ENCODE measurements at regions of chr6 and their contacts with region 1.

Region 1: GRCh38 chr6:6390849-6391602 is 70.6 kb upstream of the F13A1 start:
- DNase-seq: peak; percentile 81
- ATAC-seq: peak; percentile 75
- H3K4me3 ChIP-seq: peak overlapping the region in 3 of 5 experiments; percentile 3 to 36 (median 26)
- H3K4me3 Mint-ChIP-seq: peak overlapping the region; percentile 87
- H3K27ac ChIP-seq: peak overlapping the region; percentile 83 to 92
- H3K27ac Mint-ChIP-seq: peak overlapping the region; percentile 97
- H3K4me1 ChIP-seq: peaks cover 37 to 44% of the 10 kb centered on the region in 2 donors
- H3K4me1 Mint-ChIP-seq: peaks cover 58% of the 10 kb centered on the region
- H3K27me3 ChIP-seq: no peaks in the 10 kb centered on the region
- H3K27me3 Mint-ChIP-seq: peaks cover 3% of the 10 kb centered on the region
- CTCF ChIP-seq: no peak

Region 2: DNA sequence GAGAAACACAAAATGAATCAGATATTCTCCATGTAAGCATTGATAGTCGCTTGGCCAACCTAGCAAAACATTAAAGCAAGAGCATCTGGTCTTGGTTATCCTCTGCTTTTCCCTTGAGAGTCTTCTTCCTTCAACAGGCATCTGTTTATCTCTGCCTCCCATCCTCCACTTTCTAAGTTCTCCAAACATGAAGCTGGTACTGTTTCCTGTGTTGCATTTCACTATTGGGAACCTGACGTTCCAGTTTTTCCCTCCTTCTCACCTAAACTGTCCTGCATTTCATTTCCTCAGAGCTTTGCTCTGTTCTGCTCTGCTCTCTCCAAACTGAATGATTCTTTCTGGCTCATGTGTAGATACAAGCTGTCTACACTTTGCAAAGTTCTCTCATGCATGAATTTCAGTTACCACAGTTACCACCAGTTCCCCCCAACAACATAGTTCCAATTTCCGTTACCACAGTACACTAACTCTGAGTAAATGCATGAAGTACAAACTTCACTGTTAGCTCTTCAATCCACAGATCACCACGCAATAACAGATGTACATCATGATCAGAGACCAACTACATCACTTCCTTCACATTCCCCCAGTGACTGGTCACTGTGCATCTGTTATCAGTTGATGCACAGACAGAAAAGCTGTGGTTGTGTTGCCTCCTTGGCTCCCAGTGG is 16.2 kb after region 1 on chr6:
- CTCF ChIA-PET with region 1: interaction called, 23 read pairs
- POLR2A ChIA-PET with region 1: interaction called, 64 read pairs
- intact Hi-C with region 1: loop called (anchors 1 kb)
- DNase-seq: peak; percentile 90
- ATAC-seq: peak; percentile 85
- H3K4me3 ChIP-seq: peak overlapping the region in 3 of 5 experiments; percentile 1 to 45 (median 32)
- H3K4me3 Mint-ChIP-seq: no peak overlapping the region
- H3K27ac ChIP-seq: peak overlapping the region; percentile 65 to 69
- H3K27ac Mint-ChIP-seq: no peak overlapping the region
- H3K4me1 ChIP-seq: peaks cover 24 to 25% of the 10 kb centered on the region in 2 donors
- H3K4me1 Mint-ChIP-seq: peaks cover 4% of the 10 kb centered on the region
- H3K27me3 ChIP-seq: peaks cover 0 to 18% (median 14%) of the 10 kb centered on the region in 4 experiments
- H3K27me3 Mint-ChIP-seq: peaks cover 24% of the 10 kb centered on the region
- CTCF ChIP-seq: no peak